Lower lobe of right lung (tissue), 2 donors: ENCODE measurements at regions of chr12 and their contacts with region 1.

Region 1: GRCh38 chr12:52879394-52880351 is 25.2 kb downstream of the KRT8 start:
- DNase-seq: peak; percentile 80
- ATAC-seq: peak; percentile 89 to 90
- H3K4me3 ChIP-seq: peak overlapping the region; percentile 38
- H3K27ac ChIP-seq: no peak overlapping the region
- H3K4me1 ChIP-seq: peaks cover 22% of the 10 kb centered on the region
- H3K27me3 ChIP-seq: peaks cover 8% of the 10 kb centered on the region
- CTCF ChIP-seq: peak; percentile 62

Region 2: DNA sequence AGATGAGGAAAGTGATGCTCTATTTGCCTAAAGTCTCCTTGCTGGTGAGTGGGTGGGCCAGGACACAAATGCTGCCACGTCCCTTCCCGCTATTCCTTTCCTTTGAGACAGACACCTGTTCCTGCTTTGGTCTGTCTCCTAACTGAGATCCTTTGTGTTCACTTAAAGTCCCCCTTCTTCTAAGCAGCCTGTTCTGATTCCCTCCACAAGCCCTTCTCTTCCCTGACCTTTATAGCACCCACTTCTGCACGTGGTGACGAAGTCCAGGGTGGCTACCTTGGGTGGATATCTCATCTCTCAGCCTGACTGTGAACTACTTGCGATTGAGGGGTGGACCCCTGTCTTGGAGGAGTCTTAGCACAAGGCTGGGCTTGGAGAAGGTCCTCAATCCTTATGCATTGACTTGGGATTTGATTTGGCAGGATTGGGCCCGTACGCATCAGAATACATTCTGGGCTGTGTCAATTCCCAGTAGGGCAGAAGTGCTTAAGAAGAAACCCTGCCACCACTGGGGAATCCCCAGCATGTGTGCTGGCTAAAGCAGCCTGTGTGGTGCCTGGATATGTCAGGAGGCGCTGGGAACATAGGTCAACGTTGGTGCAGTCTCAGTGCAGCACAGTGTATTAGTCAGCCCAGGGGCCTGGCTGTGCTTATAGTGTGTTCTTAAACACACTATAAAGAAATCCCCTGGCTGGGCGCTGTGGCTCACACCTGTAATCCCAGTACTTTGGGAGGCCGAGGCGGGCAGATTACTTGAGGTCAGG is 711.5 kb before region 1 on chr12:
- intact Hi-C with region 1: no loop called
- DNase-seq: no peak
- ATAC-seq: no peak
- H3K4me3 ChIP-seq: no peak overlapping the region
- H3K27ac ChIP-seq: no peak overlapping the region
- H3K4me1 ChIP-seq: peaks cover 20% of the 10 kb centered on the region
- H3K27me3 ChIP-seq: no peaks in the 10 kb centered on the region
- CTCF ChIP-seq: no peak

Region 3: DNA sequence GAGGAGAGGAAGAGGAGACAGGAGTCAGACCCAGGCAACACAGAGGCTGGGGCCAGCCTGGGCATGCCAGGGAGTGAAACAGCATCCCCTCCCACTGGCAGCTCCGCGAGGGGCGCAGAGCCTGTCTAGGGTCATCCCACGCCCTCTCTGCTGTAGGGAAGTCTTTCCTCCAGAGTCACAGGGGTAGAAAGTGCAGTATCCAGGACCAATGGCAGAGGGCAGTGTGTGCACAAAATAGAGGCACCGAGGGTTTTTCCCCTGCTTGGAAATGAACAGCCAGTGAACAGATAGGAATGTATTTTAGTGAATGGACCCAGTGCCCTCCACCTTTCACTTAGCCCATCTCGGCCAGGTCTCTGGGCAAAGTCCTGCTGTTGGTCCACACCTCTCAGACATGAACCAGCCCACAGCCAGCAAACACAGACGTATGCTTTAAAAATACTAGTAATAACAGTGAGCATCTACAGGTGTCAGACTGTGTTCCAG is 296.7 kb before region 1 on chr12:
- intact Hi-C with region 1: loop called (anchors 5 kb)
- DNase-seq: no peak
- ATAC-seq: peak; percentile 83 to 89
- H3K4me3 ChIP-seq: no peak overlapping the region
- H3K27ac ChIP-seq: no peak overlapping the region
- H3K4me1 ChIP-seq: no peaks in the 10 kb centered on the region
- H3K27me3 ChIP-seq: peaks cover 20% of the 10 kb centered on the region
- CTCF ChIP-seq: peak; percentile 67

Region 4: GRCh38 chr12:52980693-52981423 is 101.2 kb after region 1 on chr12:
- intact Hi-C with region 1: loop called (anchors 10 kb)
- DNase-seq: peak; percentile 88
- ATAC-seq: peak; percentile 95
- H3K4me3 ChIP-seq: no peak overlapping the region
- H3K27ac ChIP-seq: no peak overlapping the region
- H3K4me1 ChIP-seq: no peaks in the 10 kb centered on the region
- H3K27me3 ChIP-seq: peaks cover 4% of the 10 kb centered on the region
- CTCF ChIP-seq: peak; percentile 98